ENCODE measurements at regions of chr14 and their contacts with region 1.

Region 1: GRCh38 chr14:99604283-99604765 is 317 bp upstream of the CCDC85C start:
- DNase-seq: peak; percentile 95 to 96
- H3K4me3 ChIP-seq: peak overlapping the region; percentile 25 to 69 (median 52)
- H3K27ac ChIP-seq: peak overlapping the region; percentile 64 to 87 (median 71)
- H3K4me1 ChIP-seq: peaks cover 20 to 40% of the 10 kb centered on the region in 2 donors
- H3K27me3 ChIP-seq: no peaks in the 10 kb centered on the region
- CTCF ChIP-seq: no peak
- POLR2A ChIP-seq: peak in 1 of 2 donors; percentile 27

Region 2: GRCh38 chr14:99563233-99564129 is 40.8 kb before region 1 on chr14:
- intact Hi-C with region 1: loop called (anchors 5 kb)
- DNase-seq: peak; percentile 93
- H3K4me3 ChIP-seq: no peak overlapping the region
- H3K27ac ChIP-seq: peak overlapping the region; percentile 51 to 84 (median 70)
- H3K4me1 ChIP-seq: peaks cover 60 to 67% of the 10 kb centered on the region in 2 donors
- H3K27me3 ChIP-seq: no peaks in the 10 kb centered on the region
- CTCF ChIP-seq: peak in 4 of 6 experiments; percentile 54 to 66 (median 60)
- POLR2A ChIP-seq: no peak

Region 3: DNA sequence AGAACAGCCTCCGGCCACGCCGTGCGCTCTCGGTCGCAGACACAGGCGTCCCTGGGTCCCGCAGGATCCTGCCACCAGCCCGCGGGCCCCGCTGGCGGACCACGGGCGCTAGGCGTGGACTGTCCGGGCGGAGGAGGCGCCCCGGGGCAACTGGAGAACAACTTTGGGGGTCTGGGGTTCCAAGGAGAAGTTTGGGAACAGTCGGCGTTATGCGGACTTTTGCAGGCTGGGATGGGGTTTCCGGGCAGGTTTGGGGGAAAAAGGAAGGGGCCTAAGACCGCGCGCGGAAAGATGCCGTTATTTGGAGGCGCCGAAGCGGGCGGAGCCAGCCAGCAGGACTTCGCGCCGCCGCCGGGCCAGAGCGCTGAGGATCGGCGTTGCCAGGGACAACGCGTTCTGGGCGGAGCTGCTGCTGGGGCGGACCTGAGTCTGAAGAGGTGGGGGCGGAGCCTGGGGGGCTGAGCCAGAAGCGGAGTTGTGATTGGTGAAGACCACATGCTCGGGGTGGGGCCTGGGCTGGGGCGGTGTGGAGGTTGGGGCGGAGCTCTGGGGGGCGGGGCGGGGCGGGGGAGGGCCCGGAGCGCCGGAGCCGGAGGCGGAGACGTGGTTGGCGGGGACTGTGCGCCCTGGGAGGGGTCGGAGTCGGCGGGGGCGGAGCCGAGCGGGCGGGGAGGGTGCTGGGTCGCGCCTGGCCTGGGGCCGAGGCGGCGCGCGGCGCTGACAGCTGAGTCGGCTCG is 79.5 kb after region 1 on chr14 and contains the start of gene CYP46A1:
- intact Hi-C with region 1: loop called (anchors 10 kb)
- DNase-seq: peak; percentile 100
- H3K4me3 ChIP-seq: peak within 1 kb of the TSS; percentile 54 to 81 (median 68)
- H3K27ac ChIP-seq: peak within 1 kb of the TSS in 2 of 3 donors; percentile 30 to 67
- H3K4me1 ChIP-seq: peaks cover 11 to 15% of the 10 kb centered on the region in 2 donors
- H3K27me3 ChIP-seq: no peaks in the 10 kb centered on the region
- CTCF ChIP-seq: no peak
- POLR2A ChIP-seq: no peak
- total RNA-seq, gene CYP46A1: 0.54 to 5.2 (median 1.5) TPM